ENCODE measurements at regions of chr16 and their contacts with region 1.

Region 1: DNA sequence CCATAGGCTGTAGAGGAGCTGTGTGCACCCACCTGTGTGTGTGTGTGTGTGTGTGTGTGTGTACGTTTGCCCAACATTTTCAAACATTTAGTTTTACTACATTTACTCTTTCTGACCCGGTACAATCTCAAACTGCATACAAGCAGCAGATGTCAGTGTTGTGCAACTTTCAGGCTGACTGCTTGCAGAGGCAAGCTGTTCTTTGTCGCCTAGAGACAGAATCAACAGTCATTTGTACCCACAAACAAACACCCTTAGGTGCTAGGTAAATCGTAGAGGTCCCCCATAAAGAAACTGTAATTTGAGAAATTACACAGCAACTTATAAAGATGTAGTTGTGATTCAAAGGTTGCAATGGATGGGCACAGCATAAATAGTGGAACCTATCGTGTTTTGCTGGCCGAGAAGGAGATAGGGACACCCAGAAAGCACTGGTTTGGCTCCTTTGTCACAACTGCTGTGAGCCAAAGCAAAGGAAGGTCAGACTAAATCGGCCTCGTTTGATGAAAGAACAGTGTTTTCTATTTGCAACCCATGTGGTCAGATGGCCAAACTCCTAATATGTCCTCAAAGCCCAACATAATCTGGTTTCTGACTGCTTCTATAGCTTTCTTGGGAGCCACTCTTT is 478.4 kb downstream of the TOX3 start:
- DNase-seq: peak; percentile 35
- ATAC-seq: peak; percentile 72
- H3K4me3 ChIP-seq: no peak overlapping the region
- H3K27ac ChIP-seq: no peak overlapping the region
- H3K4me1 ChIP-seq: no peaks in the 10 kb centered on the region
- H3K27me3 ChIP-seq: no peaks in the 10 kb centered on the region
- CTCF ChIP-seq: peak; percentile 80
- EP300 ChIP-seq: no peak
- POLR2A ChIP-seq: no peak
- RAD21 ChIP-seq: peak; percentile 55; the same call in 1 of the 2 replicates

Region 2: GRCh38 chr16:52005551-52005950 is 63.0 kb before region 1 on chr16:
- CTCF ChIA-PET with region 1: no interaction called
- POLR2A ChIA-PET with region 1: no interaction called
- in situ Hi-C with region 1: no loop called
- intact Hi-C with region 1: no loop called
- DNase-seq: no peak
- ATAC-seq: no peak
- H3K4me3 ChIP-seq: no peak overlapping the region
- H3K27ac ChIP-seq: no peak overlapping the region
- H3K4me1 ChIP-seq: no peaks in the 10 kb centered on the region
- H3K27me3 ChIP-seq: no peaks in the 10 kb centered on the region
- CTCF ChIP-seq: no peak
- EP300 ChIP-seq: no peak
- POLR2A ChIP-seq: no peak
- RAD21 ChIP-seq: no peak

Region 3: GRCh38 chr16:52906281-52906680 is 837.7 kb after region 1 on chr16:
- CTCF ChIA-PET with region 1: interaction called, 53 read pairs
- POLR2A ChIA-PET with region 1: no interaction called
- in situ Hi-C with region 1: loop called (anchors 5 kb)
- intact Hi-C with region 1: no loop called
- DNase-seq: no peak
- ATAC-seq: no peak
- H3K4me3 ChIP-seq: no peak overlapping the region
- H3K27ac ChIP-seq: no peak overlapping the region
- H3K4me1 ChIP-seq: no peaks in the 10 kb centered on the region
- H3K27me3 ChIP-seq: no peaks in the 10 kb centered on the region
- CTCF ChIP-seq: no peak
- EP300 ChIP-seq: no peak
- POLR2A ChIP-seq: no peak
- RAD21 ChIP-seq: no peak

Measured in HepG2 (cell line).